ENCODE measurements at regions of chr11 and their contacts with region 1.

Region 1: GRCh38 chr11:35485656-35486322 is 39.6 kb downstream of the PAMR1 start:
- DNase-seq: peak; percentile 97
- H3K4me3 ChIP-seq: no peak overlapping the region
- H3K27ac ChIP-seq: no peak overlapping the region
- H3K4me1 ChIP-seq: no peaks in the 10 kb centered on the region
- H3K27me3 ChIP-seq: peaks cover 20% of the 10 kb centered on the region
- CTCF ChIP-seq: peak; percentile 100

Region 2: DNA sequence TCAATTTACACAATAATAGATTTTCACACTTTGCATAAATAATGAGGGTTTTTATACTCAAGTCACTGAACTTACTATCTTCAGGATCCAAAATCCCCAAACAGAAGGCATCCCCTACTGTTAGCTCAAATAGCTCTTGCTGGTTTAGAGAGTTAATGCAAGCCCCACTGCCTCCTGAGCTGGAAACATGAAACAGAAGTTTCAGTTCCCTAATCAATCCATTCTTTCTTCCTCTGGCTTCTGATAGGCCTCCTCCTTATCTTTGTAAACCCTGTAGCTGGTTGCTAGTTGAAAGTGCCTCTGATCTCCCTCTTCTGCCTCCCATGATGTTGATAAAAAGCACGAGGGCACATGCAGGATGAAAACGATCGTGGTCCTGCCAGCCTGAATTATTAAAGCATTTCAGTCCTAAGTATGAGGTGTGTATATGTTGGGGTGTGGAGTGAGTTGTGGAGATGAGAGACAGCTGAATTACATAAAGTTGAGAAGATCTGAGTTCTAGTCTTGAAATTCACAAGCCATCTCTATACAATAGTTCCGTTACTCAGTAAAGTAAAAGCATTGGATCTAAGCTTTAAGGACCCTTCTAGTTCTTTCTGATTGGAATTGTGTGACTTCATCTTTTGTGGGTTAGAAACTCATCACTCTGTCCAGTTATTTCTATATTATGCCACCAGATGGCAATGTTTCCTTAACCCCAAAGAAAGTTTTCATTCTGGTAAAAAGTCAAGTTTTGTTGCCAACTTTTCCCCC is 899.9 kb before region 1 on chr11:
- CTCF ChIA-PET with region 1: no interaction called
- POLR2A ChIA-PET with region 1: no interaction called
- intact Hi-C with region 1: loop called (anchors 10 kb)
- DNase-seq: peak; percentile 86
- H3K4me3 ChIP-seq: no peak overlapping the region
- H3K27ac ChIP-seq: no peak overlapping the region
- H3K4me1 ChIP-seq: peaks cover 3% of the 10 kb centered on the region
- H3K27me3 ChIP-seq: peaks cover 39% of the 10 kb centered on the region
- CTCF ChIP-seq: peak; percentile 94

Region 3: GRCh38 chr11:35066783-35067423 is 418.9 kb before region 1 on chr11:
- CTCF ChIA-PET with region 1: no interaction called
- POLR2A ChIA-PET with region 1: no interaction called
- intact Hi-C with region 1: no loop called
- DNase-seq: no peak
- H3K4me3 ChIP-seq: no peak overlapping the region
- H3K27ac ChIP-seq: no peak overlapping the region
- H3K4me1 ChIP-seq: peaks cover 7% of the 10 kb centered on the region
- H3K27me3 ChIP-seq: no peaks in the 10 kb centered on the region
- CTCF ChIP-seq: no peak

Region 4: DNA sequence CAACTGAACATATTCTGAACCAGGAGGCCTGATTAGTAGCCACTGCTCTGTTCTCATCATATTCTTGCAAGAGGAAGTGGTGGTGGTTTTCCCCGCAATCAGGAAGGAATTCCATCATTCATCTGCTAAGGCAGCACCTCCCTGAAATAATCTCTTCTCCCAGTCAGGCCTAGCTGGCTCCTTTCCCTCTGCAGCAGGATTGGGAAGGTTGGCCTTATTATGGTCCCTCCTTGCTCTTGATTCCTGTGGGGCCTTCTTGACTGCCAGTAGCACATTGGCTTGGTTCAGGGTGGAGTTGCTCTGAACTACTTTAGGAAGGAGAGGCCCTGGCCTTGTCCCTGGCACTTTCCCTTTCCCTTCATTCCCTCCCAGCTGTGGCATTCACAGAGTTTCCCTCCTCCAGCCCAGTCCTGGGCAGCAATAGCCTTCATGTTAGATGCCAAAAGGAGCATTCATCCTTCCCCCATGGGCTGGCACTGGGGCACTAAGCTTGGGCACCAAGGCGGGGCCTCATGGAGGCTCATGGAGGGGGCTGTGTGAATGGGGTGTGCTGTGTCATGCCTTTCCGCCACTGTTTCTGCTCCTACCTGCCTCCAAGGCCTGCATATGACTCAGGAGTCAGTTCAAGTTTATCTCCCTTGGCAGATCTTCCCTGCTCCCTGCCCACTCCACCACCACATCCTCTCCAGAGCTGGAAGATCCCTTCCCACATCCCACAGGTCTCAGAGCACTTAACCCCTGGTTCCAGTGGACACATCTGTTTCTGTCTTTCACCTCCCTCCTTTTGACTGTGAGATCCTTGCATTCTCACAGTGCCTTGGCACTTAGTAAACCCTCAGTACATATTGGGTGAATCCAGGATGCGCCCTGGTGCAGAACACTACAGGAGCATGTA is 374.4 kb before region 1 on chr11:
- CTCF ChIA-PET with region 1: no interaction called
- POLR2A ChIA-PET with region 1: no interaction called
- intact Hi-C with region 1: no loop called
- DNase-seq: no peak
- H3K4me3 ChIP-seq: no peak overlapping the region
- H3K27ac ChIP-seq: no peak overlapping the region
- H3K4me1 ChIP-seq: no peaks in the 10 kb centered on the region
- H3K27me3 ChIP-seq: peaks cover 53% of the 10 kb centered on the region
- CTCF ChIP-seq: no peak

Region 5: DNA sequence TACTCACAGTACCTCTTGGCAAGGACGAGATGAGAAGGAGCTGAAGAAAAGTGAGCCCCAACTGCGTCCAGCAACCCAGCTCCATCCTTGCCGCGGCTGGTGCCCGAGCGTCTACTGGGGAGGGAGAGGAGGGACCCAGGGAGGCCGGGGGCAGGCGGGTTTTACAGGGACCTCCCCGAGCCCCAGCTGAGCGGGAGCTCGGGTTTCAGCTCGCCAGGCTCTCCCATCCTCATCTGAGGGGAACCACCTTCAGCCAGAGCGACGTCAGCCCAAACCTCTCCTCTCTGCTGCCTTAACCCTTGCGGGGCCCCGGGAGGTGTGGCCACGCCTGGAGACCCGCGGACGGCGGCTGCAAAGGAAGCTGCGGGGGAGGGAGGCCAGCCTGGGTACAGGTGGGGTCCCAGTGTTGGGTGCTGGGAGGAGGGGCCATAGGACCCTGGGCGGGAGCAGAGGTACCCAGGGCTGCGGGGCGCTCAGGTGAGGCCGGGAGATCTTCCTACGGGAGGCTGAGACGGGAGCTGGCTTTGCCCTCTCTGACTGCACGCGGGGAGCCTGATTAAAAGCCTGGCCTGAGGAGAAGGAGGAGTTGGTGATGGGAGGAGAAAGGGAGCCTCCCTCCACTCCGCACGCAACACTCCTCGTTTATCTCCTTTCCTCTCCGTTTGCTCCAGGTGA is 39.8 kb after region 1 on chr11 and contains the start of gene PAMR1:
- CTCF ChIA-PET with region 1: interaction called, 13 read pairs
- POLR2A ChIA-PET with region 1: no interaction called
- intact Hi-C with region 1: no loop called
- DNase-seq: peak; percentile 52
- H3K4me3 ChIP-seq: no peak within 1 kb of the TSS
- H3K27ac ChIP-seq: no peak within 1 kb of the TSS
- H3K4me1 ChIP-seq: peaks cover 16% of the 10 kb centered on the region
- H3K27me3 ChIP-seq: peaks cover 77% of the 10 kb centered on the region
- CTCF ChIP-seq: no peak
- total RNA-seq, gene PAMR1: 0.39 and 0.62 TPM in 2 replicates

Region 6: DNA sequence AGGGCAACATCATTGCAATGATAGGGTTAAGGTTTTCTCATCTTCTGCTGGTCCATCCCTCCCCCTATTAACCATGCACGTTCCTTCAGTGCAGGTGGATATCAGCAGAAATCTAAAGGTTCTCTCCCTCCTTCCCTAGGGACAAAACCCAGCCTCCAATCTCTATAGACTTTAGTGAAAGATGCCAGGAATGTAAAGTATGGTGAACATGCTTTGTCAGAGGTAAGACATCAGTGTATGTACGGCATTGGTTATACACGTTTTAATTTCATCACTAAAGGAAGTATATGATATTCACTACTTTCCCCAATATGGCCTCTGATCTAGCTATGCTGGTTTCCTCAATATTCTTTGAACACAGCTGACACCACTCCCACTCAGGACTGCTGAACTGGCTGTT is 376.9 kb after region 1 on chr11:
- CTCF ChIA-PET with region 1: interaction called, 10 read pairs
- POLR2A ChIA-PET with region 1: no interaction called
- intact Hi-C with region 1: no loop called
- DNase-seq: no peak
- H3K4me3 ChIP-seq: no peak overlapping the region
- H3K27ac ChIP-seq: no peak overlapping the region
- H3K4me1 ChIP-seq: no peaks in the 10 kb centered on the region
- H3K27me3 ChIP-seq: no peaks in the 10 kb centered on the region
- CTCF ChIP-seq: no peak

Region 7: GRCh38 chr11:36258730-36259360 is 773.1 kb after region 1 on chr11:
- CTCF ChIA-PET with region 1: interaction called, 14 read pairs
- POLR2A ChIA-PET with region 1: no interaction called
- intact Hi-C with region 1: loop called (anchors 2 kb)
- DNase-seq: peak; percentile 93
- H3K4me3 ChIP-seq: no peak overlapping the region
- H3K27ac ChIP-seq: no peak overlapping the region
- H3K4me1 ChIP-seq: no peaks in the 10 kb centered on the region
- H3K27me3 ChIP-seq: peaks cover 20% of the 10 kb centered on the region
- CTCF ChIP-seq: peak; percentile 99

Region 8: DNA sequence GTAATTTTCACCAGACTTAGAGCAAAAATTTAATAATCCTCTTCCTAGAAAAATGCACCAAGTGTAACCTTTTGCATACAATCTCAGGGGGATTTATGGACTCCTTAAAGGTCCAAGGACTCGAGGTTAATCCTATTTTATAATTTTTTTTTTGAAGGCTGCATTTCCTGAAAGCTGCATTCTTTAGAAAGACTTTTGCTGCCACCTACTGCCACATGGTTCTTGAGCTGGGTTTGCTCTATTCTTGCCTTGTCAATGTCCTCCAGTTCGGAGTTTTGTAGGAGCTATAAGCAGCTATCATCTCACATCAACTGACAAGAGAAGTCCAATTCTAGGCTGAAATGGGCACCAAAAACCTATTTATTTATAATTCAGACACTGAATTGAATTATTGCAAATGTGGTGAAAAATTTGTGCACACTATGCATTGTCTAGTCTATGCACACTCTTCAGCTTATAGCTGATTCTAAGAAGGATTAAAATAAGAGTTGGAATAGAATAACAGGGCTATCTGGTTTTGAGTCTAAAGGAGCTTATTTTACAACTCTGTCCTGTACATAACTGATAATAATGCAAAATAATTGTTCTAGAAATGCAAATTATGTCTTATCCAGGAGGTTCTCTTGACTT is 993.0 kb after region 1 on chr11:
- CTCF ChIA-PET with region 1: no interaction called
- POLR2A ChIA-PET with region 1: no interaction called
- intact Hi-C with region 1: loop called (anchors 5 kb)
- DNase-seq: peak; percentile 93
- H3K4me3 ChIP-seq: no peak overlapping the region
- H3K27ac ChIP-seq: no peak overlapping the region
- H3K4me1 ChIP-seq: peaks cover 14% of the 10 kb centered on the region
- H3K27me3 ChIP-seq: no peaks in the 10 kb centered on the region
- CTCF ChIP-seq: peak; percentile 98

Measured in A673 (cell line).